Caco-2 (cell line): ENCODE measurements at regions of chr5 and their contacts with region 1.

Region 1: DNA sequence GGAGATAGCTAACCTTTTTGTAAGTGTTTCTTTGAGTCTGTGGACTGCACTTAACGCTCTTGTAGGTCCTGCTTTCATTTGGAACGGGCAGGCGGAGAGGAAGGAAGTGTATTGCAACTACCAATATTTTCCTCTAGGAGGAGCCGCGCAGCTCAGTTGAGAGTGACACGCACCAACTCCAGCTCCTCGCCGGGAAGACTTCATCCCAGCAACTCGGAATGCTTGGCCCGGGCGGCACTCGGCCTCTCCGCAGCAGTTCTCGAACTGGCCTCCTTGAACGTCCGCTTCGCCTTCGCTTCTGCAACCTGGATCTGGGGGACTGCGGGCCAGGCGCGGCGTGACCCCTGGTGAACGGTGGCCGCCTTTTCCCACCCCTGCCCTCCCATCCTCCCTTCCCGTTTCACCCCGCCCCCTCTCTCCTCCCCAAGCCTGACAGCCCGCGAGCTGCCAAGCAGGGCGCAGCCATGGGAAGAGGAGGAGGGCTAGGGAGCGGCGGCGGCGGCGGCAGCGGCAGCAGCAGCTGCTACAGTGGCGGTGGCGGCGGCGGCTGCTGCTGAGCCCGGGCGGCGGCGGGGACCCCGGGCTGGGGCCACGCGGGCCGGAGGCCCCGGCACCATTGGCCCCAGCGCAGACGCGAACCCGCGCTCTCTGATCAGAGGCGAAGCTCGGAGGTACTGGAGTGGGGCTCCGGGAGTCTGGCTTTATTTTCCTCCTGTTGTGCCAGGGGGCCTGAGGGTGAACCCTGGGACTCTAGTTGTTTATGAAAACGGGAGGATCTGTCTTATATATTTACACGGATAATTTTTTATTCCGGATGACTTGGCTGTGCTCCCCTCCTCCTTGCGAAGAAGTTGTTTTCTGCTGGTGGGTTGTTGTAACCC is at the start of gene GHR:
- DNase-seq: peak; percentile 83 to 84
- H3K4me3 ChIP-seq: peak within 1 kb of the TSS; percentile 63
- H3K4me3 Mint-ChIP-seq: no peak within 1 kb of the TSS
- H3K27ac Mint-ChIP-seq: no peak within 1 kb of the TSS
- H3K4me1 ChIP-seq: no peaks in the 10 kb centered on the region
- H3K4me1 Mint-ChIP-seq: no peaks in the 10 kb centered on the region
- H3K27me3 ChIP-seq: no peaks in the 10 kb centered on the region
- H3K27me3 Mint-ChIP-seq: no peaks in the 10 kb centered on the region
- CTCF ChIP-seq: peak; percentile 73 to 74
- total RNA-seq, gene GHR: 0.54 and 1.2 TPM in 2 replicates

Region 2: GRCh38 chr5:42583322-42583721 is 159.8 kb after region 1 on chr5:
- CTCF ChIA-PET with region 1: interaction called, 30 read pairs
- POLR2A ChIA-PET with region 1: no interaction called
- intact Hi-C with region 1: loop called (anchors 1 kb)
- DNase-seq: peak; percentile 54 to 66
- H3K4me3 ChIP-seq: no peak overlapping the region
- H3K4me3 Mint-ChIP-seq: no peak overlapping the region
- H3K27ac Mint-ChIP-seq: no peak overlapping the region
- H3K4me1 ChIP-seq: no peaks in the 10 kb centered on the region
- H3K4me1 Mint-ChIP-seq: no peaks in the 10 kb centered on the region
- H3K27me3 ChIP-seq: no peaks in the 10 kb centered on the region
- H3K27me3 Mint-ChIP-seq: peaks cover 3% of the 10 kb centered on the region
- CTCF ChIP-seq: peak; percentile 69 to 72